ENCODE measurements at regions of chr2 and their contacts with region 1.

Region 1: DNA sequence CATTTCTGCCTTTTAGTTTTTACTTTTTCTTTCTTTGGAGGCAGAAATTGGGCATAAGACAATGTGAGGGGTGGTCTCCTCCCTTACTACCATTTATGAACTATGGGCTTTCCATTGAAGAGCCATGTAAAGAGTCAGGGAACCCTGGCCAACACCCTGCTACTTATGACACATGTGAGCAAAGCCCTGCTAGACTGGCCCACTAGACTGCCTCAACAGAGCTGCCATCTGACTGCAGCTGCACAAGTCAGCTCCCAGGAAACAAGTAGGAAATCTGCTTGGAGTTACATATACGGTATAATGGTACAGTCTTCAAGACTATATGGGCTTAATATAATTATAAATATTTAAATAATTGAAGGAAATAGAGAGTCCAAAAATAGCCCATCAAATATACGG is 816.8 kb downstream of the TRIB2 start:
- DNase-seq: peak; percentile 56
- H3K4me3 Mint-ChIP-seq: peak overlapping the region; percentile 76
- H3K27ac Mint-ChIP-seq: peak overlapping the region; percentile 96
- H3K4me1 Mint-ChIP-seq: peaks cover 62% of the 10 kb centered on the region
- H3K27me3 Mint-ChIP-seq: no peaks in the 10 kb centered on the region
- CTCF ChIP-seq: no peak

Region 2: DNA sequence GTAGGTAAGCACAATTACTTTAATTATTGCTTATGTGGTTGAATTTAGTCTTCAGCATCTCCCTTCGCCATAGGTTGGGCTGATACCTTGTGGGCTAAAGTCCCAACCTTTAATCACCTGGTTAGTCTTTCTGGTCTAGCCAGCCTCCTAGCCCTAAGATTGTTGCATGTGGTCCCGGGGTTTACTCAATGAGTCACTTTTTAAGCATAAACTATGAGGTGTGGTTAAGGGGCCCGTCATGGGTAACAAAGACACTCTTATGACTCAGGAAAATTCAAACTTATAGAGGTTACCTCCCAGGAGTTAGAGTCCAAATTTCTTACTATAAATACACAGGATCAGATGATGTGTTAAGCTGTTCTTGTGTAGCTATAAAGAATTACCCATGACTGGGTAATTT is 24.8 kb after region 1 on chr2:
- CTCF ChIA-PET with region 1: interaction called, 3 read pairs
- intact Hi-C with region 1: loop called (anchors 2 kb)
- DNase-seq: peak; percentile 76
- H3K4me3 Mint-ChIP-seq: peak overlapping the region; percentile 36
- H3K27ac Mint-ChIP-seq: peak overlapping the region; percentile 95
- H3K4me1 Mint-ChIP-seq: peaks cover 42% of the 10 kb centered on the region
- H3K27me3 Mint-ChIP-seq: no peaks in the 10 kb centered on the region
- CTCF ChIP-seq: no peak

Measured in Calu3 (cell line).